CD14-positive monocyte (primary cell): ENCODE measurements at regions of chr15 and their contacts with region 1.

Region 1: DNA sequence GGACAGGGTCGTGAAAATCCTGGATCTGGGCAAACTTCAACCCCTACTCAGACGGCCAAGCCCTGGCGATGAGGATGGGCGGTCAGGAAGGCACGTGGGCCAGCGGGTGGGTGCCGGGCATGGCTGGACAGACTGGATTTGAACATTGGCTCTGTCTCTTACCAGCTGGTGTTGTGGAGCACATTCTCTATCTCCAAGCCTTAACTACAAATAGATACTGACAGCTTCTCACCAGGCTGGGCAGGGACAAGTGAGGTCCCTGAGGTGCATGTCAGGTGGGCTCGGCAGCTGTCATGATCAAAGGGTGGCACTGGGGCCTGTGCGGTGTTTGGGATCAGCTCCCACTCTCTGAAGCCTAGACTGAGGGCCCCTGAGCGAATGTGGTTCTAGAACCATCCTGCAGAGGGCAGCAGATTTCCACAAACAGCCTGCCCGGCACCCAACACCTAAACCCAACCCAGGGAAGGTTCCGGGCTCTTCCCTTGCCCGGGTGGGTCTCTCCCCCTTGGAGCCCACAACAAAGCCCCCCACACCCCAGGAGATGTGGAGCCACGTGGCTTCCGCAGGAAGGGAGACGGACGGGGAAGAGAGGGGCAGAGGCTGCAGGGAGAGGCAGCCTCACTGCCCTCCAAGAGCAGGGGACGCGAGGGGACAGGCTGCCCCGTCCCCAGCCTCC is 58.4 kb downstream of the RGMA start:
- DNase-seq: peak; percentile 59 to 70 (median 66)
- H3K4me3 ChIP-seq: no peak overlapping the region
- H3K4me3 Mint-ChIP-seq: peak overlapping the region in 1 of 2 donors; percentile 51
- H3K27ac ChIP-seq: no peak overlapping the region
- H3K27ac Mint-ChIP-seq: peak overlapping the region in 6 of 7 donors; percentile 37 to 98 (median 66)
- H3K4me1 ChIP-seq: peaks cover 55 to 59% of the 10 kb centered on the region in 2 donors
- H3K4me1 Mint-ChIP-seq: peaks cover 57% of the 10 kb centered on the region
- H3K27me3 ChIP-seq: no peaks in the 10 kb centered on the region
- H3K27me3 Mint-ChIP-seq: peaks cover 2 to 5% (median 2%) of the 10 kb centered on the region in 3 donors
- CTCF ChIP-seq: peak; percentile 88

Region 2: DNA sequence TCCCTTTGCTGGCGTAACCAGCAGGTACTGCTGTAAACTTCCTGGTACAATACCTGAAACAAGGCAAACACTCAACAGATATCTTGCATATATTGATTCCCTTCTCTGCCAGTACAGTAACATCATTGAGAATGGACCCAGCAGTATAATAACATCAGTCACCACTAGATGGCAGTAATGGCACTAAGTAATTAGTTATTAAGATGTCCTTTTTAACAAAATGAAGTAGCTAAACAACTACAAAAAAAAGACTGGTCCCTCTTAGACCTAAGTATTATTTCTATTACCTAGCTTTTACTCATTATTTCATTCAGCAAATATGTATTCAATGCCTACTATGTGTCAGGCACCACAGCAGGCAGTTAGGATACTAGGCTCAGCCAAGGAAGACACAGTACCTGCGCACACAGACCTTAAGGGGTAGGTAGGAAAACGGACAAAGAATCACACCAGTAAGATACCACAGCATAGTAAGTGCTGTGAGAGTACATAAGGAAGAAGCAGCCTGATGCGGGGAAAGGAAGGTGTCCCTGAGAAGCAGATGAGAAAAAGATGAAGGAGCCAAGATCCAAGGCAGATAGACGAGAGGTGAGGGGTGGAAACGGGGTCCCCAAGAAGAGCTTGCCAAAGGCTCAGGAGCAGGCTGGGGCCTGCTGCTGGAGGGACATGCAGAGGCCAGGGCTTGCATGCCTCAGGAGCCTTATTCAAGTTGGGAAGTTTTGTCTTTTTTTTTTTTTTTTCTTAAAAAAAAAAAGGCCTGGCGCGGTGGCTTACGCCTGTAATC is 233.2 kb before region 1 on chr15:
- intact Hi-C with region 1: loop called in 1 of 2 experiments (anchors 10 kb)
- DNase-seq: peak; percentile 68 to 94 (median 77)
- H3K4me3 ChIP-seq: no peak overlapping the region
- H3K4me3 Mint-ChIP-seq: no peak overlapping the region
- H3K27ac ChIP-seq: peak overlapping the region in 1 of 2 donors; percentile 6
- H3K27ac Mint-ChIP-seq: peak overlapping the region in 5 of 7 donors; percentile 65 to 94 (median 88)
- H3K4me1 ChIP-seq: peaks cover 17 to 30% of the 10 kb centered on the region in 2 donors
- H3K4me1 Mint-ChIP-seq: peaks cover 23% of the 10 kb centered on the region
- H3K27me3 ChIP-seq: no peaks in the 10 kb centered on the region
- H3K27me3 Mint-ChIP-seq: peaks cover 0 to 5% (median 0%) of the 10 kb centered on the region in 3 donors
- CTCF ChIP-seq: peak; percentile 78

Region 3: DNA sequence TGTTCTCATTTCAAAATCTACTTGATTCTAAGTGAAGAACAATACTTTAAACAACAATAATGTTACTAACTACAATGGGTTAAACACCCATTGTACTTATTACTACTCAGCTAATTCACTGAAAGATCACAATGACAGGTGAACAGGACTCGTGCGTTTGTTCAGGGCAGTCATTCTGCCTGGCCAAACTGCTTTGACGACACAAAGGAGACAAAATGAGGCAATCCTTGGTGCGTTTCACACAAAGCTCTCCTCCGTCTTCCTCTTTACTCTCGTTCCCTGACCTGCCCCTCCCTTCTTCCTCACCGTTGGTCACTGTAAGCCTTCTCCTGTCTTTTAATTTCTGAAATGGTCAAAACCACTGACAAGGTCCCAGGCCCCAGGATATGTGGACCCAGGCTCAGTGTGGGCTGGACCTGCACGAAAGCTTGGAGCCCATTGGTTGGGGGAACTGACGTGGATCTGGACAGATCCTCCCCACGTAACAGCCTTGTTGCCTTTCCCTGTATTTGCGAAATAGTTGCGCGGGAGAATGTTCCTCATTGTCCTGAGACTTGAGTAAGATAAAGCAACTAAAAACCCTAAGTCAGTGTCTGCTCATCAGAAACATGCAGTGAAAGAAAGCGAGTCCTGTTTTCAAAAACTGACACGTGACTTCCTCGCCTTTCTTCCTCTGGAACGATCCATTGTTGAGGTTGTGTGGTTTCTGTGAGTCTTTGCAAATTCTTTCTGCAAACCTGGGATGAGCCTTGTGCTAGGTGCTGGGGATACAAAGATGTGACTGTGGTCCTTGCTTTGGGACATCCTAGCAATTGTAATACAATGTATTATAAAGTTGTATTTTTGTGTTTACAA is 205.6 kb after region 1 on chr15:
- intact Hi-C with region 1: loop called in 1 of 2 experiments (anchors 10 kb)
- DNase-seq: peak; percentile 92 to 98 (median 94)
- H3K4me3 ChIP-seq: peak overlapping the region; percentile 25 to 64 (median 30)
- H3K4me3 Mint-ChIP-seq: peak overlapping the region; percentile 70 to 84
- H3K27ac ChIP-seq: peak overlapping the region; percentile 92 to 94
- H3K27ac Mint-ChIP-seq: peak overlapping the region; percentile 97 to 100 (median 99)
- H3K4me1 ChIP-seq: peaks cover 33 to 35% of the 10 kb centered on the region in 2 donors
- H3K4me1 Mint-ChIP-seq: peaks cover 36% of the 10 kb centered on the region
- H3K27me3 ChIP-seq: no peaks in the 10 kb centered on the region
- H3K27me3 Mint-ChIP-seq: peaks cover 0 to 2% (median 0%) of the 10 kb centered on the region in 3 donors
- CTCF ChIP-seq: no peak

Region 4: DNA sequence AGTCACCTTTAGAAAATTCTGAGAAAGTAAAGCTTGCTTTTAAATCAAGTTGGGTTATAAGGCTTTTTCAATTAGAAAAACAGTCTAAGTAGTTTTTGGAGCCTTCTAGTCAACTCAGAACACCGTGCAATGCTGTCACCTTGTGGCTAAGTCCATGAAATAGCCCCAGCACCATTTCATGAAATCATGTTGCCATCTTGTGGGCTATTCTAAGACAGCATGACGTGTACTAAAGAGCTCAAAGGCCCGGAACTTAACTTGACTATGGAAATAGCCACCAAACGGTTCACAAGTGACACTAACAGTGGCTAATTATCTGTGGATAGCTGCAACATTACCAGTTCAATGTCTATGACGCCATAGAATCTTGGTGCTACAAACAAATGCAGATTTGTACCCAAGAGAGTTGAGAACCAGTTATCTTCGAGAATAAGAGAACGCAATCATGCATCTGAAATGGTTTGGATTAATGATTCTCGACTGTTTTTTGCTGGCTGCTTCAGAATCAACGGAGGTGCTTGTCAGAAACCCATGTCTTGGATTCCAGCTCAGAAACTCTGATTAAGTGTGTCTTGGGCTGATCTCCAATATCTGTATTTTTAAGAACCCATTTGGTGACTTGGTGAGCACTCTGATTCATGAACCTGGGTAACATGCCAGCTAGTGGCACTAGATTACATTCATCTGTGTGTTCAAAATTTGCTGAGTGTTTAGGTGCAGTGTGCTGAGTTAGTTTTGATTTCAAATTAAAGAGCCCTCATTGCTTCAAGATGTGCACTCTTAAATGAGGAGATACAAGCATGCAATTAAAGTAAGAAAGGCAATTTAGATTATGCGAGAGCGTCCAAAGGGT is 1089.6 kb after region 1 on chr15:
- intact Hi-C with region 1: loop called in 1 of 2 experiments (anchors 5 kb)
- DNase-seq: peak; percentile 50 to 70 (median 67)
- H3K4me3 ChIP-seq: no peak overlapping the region
- H3K4me3 Mint-ChIP-seq: no peak overlapping the region
- H3K27ac ChIP-seq: no peak overlapping the region
- H3K27ac Mint-ChIP-seq: no peak overlapping the region
- H3K4me1 ChIP-seq: peaks cover 9 to 19% of the 10 kb centered on the region in 2 donors
- H3K4me1 Mint-ChIP-seq: peaks cover 15% of the 10 kb centered on the region
- H3K27me3 ChIP-seq: no peaks in the 10 kb centered on the region
- H3K27me3 Mint-ChIP-seq: peaks cover 0 to 2% (median 0%) of the 10 kb centered on the region in 3 donors
- CTCF ChIP-seq: peak; percentile 76